ENCODE measurements at regions of chr14 and their contacts with region 1.

Region 1: DNA sequence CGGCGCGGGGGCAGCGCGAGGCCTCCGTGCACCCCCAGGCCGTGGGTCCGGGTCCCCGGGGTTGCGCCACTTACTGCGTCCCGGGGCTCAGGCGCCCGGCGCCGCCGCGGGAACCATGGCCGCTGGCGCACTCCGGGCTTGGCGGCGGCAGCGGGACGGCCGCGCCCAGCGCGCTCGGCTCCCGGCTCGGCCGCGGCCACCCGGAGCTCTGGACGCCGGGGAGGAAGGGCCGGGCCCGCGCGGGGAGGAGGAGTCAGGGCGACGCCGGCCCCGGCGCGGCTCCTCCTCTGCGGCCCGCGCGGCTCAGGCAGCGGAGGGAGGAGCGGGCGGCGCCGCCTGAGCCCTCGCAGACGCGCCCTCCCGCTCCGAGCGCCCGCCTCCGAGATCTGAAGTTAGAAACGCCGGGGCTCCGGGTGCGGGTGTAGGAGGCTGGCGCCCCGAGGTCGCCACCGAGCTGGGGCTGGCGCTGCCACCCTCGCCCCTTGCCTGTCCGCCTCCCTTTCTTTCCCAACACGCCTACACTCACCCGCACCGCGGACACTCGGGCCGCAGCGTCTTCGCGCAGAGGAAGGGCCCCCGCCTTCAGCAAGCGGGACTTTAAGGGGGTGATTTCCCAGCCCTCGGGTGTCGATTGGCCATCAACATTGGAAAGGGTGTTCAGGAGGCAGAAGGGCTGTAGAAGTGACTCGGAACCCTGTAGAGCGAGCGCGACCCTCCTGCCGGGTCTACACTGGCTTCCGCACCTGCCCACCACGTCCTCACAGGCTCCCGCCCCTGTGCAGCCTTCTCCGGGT is at the start of gene NIN:
- DNase-seq: peak; percentile 66 to 76 (median 74)
- H3K4me3 ChIP-seq: peak within 1 kb of the TSS; percentile 77 to 81
- H3K4me3 Mint-ChIP-seq: peak within 1 kb of the TSS; percentile 95 to 100 (median 97)
- H3K27ac ChIP-seq: peak within 1 kb of the TSS; percentile 62
- H3K27ac Mint-ChIP-seq: peak within 1 kb of the TSS; percentile 92 to 97 (median 96)
- H3K4me1 ChIP-seq: peaks cover 56% of the 10 kb centered on the region
- H3K4me1 Mint-ChIP-seq: peaks cover 45 to 72% (median 53%) of the 10 kb centered on the region in 4 donors
- H3K27me3 ChIP-seq: no peaks in the 10 kb centered on the region
- H3K27me3 Mint-ChIP-seq: no peaks in the 10 kb centered on the region
- total RNA-seq, gene NIN: 99.7 to 102 TPM

Region 2: GRCh38 chr14:50773632-50774541 is 57.2 kb before region 1 on chr14:
- CTCF ChIA-PET with region 1: interaction called, 16 read pairs
- POLR2A ChIA-PET with region 1: interaction called, 12 read pairs
- intact Hi-C with region 1: no loop called
- DNase-seq: no peak
- H3K4me3 ChIP-seq: no peak overlapping the region
- H3K4me3 Mint-ChIP-seq: peak overlapping the region in 1 of 8 donors; percentile 33
- H3K27ac ChIP-seq: no peak overlapping the region
- H3K27ac Mint-ChIP-seq: peak overlapping the region in 6 of 7 donors; percentile 25 to 87 (median 59)
- H3K4me1 ChIP-seq: peaks cover 13% of the 10 kb centered on the region
- H3K4me1 Mint-ChIP-seq: peaks cover 15 to 31% (median 20%) of the 10 kb centered on the region in 4 donors
- H3K27me3 ChIP-seq: no peaks in the 10 kb centered on the region
- H3K27me3 Mint-ChIP-seq: no peaks in the 10 kb centered on the region

Region 3: GRCh38 chr14:50785457-50786063 is 45.6 kb before region 1 on chr14:
- CTCF ChIA-PET with region 1: interaction called, 14 read pairs
- POLR2A ChIA-PET with region 1: interaction called, 37 read pairs
- intact Hi-C with region 1: loop called (anchors 2 kb)
- DNase-seq: peak in 1 of 5 donors; percentile 22
- H3K4me3 ChIP-seq: no peak overlapping the region
- H3K4me3 Mint-ChIP-seq: peak overlapping the region; percentile 56 to 91 (median 74)
- H3K27ac ChIP-seq: peak overlapping the region; percentile 46
- H3K27ac Mint-ChIP-seq: peak overlapping the region; percentile 82 to 96 (median 88)
- H3K4me1 ChIP-seq: peaks cover 69% of the 10 kb centered on the region
- H3K4me1 Mint-ChIP-seq: peaks cover 52 to 89% (median 72%) of the 10 kb centered on the region in 4 donors
- H3K27me3 ChIP-seq: no peaks in the 10 kb centered on the region
- H3K27me3 Mint-ChIP-seq: no peaks in the 10 kb centered on the region

Region 4: GRCh38 chr14:50813544-50813863 is 17.6 kb before region 1 on chr14:
- CTCF ChIA-PET with region 1: interaction called, 5 read pairs
- POLR2A ChIA-PET with region 1: interaction called, 53 read pairs
- intact Hi-C with region 1: loop called (anchors 1 kb)
- DNase-seq: peak; percentile 50 to 64 (median 58)
- H3K4me3 ChIP-seq: no peak overlapping the region
- H3K4me3 Mint-ChIP-seq: peak overlapping the region; percentile 77 to 92 (median 86)
- H3K27ac ChIP-seq: no peak overlapping the region
- H3K27ac Mint-ChIP-seq: peak overlapping the region; percentile 70 to 95 (median 86)
- H3K4me1 ChIP-seq: peaks cover 37% of the 10 kb centered on the region
- H3K4me1 Mint-ChIP-seq: peaks cover 40 to 69% (median 53%) of the 10 kb centered on the region in 4 donors
- H3K27me3 ChIP-seq: no peaks in the 10 kb centered on the region
- H3K27me3 Mint-ChIP-seq: no peaks in the 10 kb centered on the region

Region 5: DNA sequence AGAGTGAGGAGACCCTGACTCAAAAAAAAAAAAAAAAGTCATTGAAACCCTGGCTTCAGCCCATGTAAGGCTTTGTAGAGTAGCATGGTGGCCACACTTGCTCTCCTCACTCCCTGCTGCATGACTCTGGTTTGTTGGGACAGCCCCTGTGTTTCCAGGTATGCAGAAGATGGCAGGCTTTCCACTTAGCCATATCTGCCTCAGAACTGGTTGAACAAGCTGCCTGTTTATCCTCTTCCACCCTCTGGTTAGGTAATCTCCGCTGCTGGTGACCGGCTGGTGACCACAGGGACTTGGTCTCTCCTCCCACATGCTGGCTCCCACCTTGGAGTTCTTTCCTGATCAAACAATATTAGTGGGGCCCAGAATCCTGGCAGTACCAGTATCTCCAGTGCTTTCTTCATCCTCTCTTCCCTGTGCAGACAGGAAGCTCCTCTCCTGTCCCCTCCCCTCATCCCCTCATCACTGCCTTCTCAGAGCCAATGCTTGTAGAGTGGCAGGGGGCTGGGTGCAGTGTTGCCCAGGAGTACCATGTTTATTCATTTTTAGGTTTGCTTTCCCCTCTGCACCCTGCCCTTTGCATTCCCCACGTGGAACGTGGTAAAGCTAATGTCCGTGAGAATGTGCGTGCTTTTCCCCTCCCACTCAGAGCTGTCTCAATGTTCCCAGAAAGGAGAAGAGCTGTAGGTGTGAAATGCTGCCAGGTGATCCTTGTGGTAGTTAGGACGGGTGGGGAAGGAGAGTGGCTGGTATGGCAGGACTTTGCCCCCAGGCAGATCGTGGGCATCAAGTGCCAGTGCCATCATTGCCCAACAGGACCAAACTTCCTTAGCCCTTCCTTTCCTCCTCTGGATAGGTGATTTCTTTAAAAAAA is 52.1 kb after region 1 on chr14:
- CTCF ChIA-PET with region 1: no interaction called
- POLR2A ChIA-PET with region 1: no interaction called
- intact Hi-C with region 1: no loop called
- DNase-seq: no peak
- H3K4me3 ChIP-seq: no peak overlapping the region
- H3K4me3 Mint-ChIP-seq: no peak overlapping the region
- H3K27ac ChIP-seq: no peak overlapping the region
- H3K27ac Mint-ChIP-seq: no peak overlapping the region
- H3K4me1 ChIP-seq: no peaks in the 10 kb centered on the region
- H3K4me1 Mint-ChIP-seq: no peaks in the 10 kb centered on the region
- H3K27me3 ChIP-seq: no peaks in the 10 kb centered on the region
- H3K27me3 Mint-ChIP-seq: peaks cover 18 to 32% of the 10 kb centered on the region in 2 donors

Region 6: GRCh38 chr14:51395361-51395849 is 564.3 kb after region 1 on chr14:
- CTCF ChIA-PET with region 1: no interaction called
- POLR2A ChIA-PET with region 1: no interaction called
- intact Hi-C with region 1: no loop called
- DNase-seq: no peak
- H3K4me3 ChIP-seq: no peak overlapping the region
- H3K4me3 Mint-ChIP-seq: no peak overlapping the region
- H3K27ac ChIP-seq: no peak overlapping the region
- H3K27ac Mint-ChIP-seq: no peak overlapping the region
- H3K4me1 ChIP-seq: no peaks in the 10 kb centered on the region
- H3K4me1 Mint-ChIP-seq: no peaks in the 10 kb centered on the region
- H3K27me3 ChIP-seq: no peaks in the 10 kb centered on the region
- H3K27me3 Mint-ChIP-seq: peaks cover 0 to 13% of the 10 kb centered on the region in 2 donors

Region 7: DNA sequence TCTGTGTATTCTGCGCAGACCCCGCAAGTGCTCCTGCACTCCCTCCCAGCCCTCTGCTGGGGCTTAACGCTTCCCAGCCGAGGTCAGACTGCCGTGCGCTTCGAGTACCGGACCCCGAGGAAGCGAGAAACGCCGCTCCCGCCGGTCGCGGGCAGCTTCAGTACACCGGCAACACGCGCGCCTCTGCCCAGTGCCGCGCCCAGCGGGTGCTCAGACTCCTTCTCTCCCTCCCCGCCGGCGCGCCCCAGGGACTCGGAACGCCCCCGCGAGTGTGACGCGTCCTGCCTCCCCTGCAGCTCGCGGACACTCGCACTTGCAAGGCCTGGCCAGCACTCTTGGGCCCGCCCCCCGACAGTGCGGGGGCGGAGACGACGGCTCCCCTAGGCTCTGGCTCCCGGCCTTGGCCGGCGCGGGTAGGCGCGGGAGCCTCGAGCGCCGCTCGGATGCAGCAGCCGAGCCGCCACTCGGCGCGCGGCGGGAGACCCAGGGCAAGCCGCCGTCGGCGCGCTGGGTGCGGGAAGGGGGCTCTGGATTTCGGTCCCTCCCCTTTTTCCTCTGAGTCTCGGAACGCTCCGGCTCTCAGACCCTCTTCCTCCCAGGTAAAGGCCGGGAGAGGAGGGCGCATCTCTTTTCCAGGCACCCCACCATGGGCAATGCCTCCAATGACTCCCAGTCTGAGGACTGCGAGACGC is 1482.9 kb after region 1 on chr14 and contains the start of gene PTGER2:
- CTCF ChIA-PET with region 1: no interaction called
- POLR2A ChIA-PET with region 1: no interaction called
- intact Hi-C with region 1: loop called (anchors 5 kb)
- DNase-seq: peak; percentile 64 to 83 (median 74)
- H3K4me3 ChIP-seq: peak within 1 kb of the TSS; percentile 83 to 86
- H3K4me3 Mint-ChIP-seq: peak within 1 kb of the TSS; percentile 95 to 100 (median 99)
- H3K27ac ChIP-seq: peak within 1 kb of the TSS; percentile 59
- H3K27ac Mint-ChIP-seq: peak within 1 kb of the TSS; percentile 87 to 97 (median 92)
- H3K4me1 ChIP-seq: peaks cover 70% of the 10 kb centered on the region
- H3K4me1 Mint-ChIP-seq: peaks cover 45 to 90% (median 63%) of the 10 kb centered on the region in 4 donors
- H3K27me3 ChIP-seq: no peaks in the 10 kb centered on the region
- H3K27me3 Mint-ChIP-seq: peaks cover 0 to 2% of the 10 kb centered on the region in 2 donors
- total RNA-seq, gene PTGER2: 29.4 to 30.2 TPM